K562 (cell line): ENCODE measurements at regions of chr19 and their contacts with region 1.

Region 1: GRCh38 chr19:17859533-17860330 is at the start of gene RPL18A:
- DNase-seq: peak; percentile 93 to 100 (median 94)
- ATAC-seq: peak; percentile 94
- H3K4me3 ChIP-seq: peak within 1 kb of the TSS; percentile 82
- H3K27ac ChIP-seq: peak within 1 kb of the TSS; percentile 91
- H3K4me1 ChIP-seq: peaks cover 7 to 34% of the 10 kb centered on the region in 2 experiments; a peak in 4 of 5 replicates
- H3K27me3 ChIP-seq: no peaks in the 10 kb centered on the region
- CTCF ChIP-seq: peak; percentile 91 to 98 (median 94)
- EP300 ChIP-seq: no peak; the same call in 1 of the 2 replicates
- POLR2A ChIP-seq: peak; percentile 99
- RAD21 ChIP-seq: peak; percentile 89
- polyA plus RNA-seq, gene RPL18A: 1,130 to 1,273 TPM

Region 2: DNA sequence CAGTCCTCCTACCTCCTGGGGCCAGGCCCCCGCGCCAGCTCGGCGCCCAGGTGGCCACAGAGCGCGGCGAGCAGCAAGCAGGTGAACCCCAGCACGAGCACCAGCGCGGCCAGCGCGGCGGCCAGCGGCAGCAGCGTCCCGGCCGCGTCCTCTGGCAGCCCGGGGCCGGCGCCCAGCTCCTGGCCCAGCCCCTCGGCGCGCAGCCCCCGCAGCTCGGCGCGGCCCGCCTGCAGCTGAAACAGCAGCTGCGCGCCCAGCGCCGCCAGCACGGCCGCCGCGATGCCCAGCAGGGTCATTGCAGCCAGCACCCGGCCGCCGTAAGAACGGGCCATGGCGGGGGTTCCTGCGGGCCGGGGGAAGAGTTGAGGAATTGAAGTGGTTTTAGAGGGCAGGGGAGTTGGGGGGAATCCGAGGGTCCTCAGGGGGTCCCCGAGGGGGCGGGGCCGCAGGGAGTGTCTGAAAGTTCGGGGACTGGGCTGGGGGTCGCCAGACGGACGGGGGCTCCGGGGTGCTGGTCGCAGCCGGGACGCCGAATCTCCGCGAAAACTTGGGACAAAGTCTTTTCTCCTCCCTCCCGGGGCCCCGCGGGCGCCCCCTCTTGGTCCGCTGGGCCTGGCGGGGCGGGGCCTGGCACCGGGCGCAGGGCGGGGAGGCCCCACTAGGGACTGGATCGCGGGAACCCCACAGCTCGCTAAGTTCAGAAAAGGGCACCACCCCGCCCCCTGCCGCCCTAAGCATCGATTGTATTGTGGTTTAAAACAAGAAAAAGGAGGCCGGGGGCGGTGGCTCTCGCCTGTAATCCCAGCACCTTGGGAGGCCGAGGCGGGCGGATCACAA is 411.4 kb before region 1 on chr19 and contains the start of gene TMEM221:
- CTCF ChIA-PET with region 1: no interaction called
- POLR2A ChIA-PET with region 1: no interaction called
- in situ Hi-C with region 1: loop called (anchors 5 kb)
- intact Hi-C with region 1: no loop called
- DNase-seq: peak; percentile 65 to 91 (median 84)
- ATAC-seq: peak; percentile 85
- H3K4me3 ChIP-seq: peak within 1 kb of the TSS; percentile 43
- H3K27ac ChIP-seq: no peak within 1 kb of the TSS
- H3K4me1 ChIP-seq: peaks cover 9 to 27% of the 10 kb centered on the region in 2 experiments; a peak in 4 of 5 replicates
- H3K27me3 ChIP-seq: peaks cover 0 to 10% of the 10 kb centered on the region in 2 experiments; a peak in 2 of 5 replicates
- CTCF ChIP-seq: peak; percentile 53 to 80 (median 69)
- EP300 ChIP-seq: no peak
- POLR2A ChIP-seq: no peak
- RAD21 ChIP-seq: peak; percentile 15 to 39; a peak in 2 of 4 replicates
- polyA plus RNA-seq, gene TMEM221: 0.06 TPM in 1 of 2 experiments, not detected in the other

Region 3: DNA sequence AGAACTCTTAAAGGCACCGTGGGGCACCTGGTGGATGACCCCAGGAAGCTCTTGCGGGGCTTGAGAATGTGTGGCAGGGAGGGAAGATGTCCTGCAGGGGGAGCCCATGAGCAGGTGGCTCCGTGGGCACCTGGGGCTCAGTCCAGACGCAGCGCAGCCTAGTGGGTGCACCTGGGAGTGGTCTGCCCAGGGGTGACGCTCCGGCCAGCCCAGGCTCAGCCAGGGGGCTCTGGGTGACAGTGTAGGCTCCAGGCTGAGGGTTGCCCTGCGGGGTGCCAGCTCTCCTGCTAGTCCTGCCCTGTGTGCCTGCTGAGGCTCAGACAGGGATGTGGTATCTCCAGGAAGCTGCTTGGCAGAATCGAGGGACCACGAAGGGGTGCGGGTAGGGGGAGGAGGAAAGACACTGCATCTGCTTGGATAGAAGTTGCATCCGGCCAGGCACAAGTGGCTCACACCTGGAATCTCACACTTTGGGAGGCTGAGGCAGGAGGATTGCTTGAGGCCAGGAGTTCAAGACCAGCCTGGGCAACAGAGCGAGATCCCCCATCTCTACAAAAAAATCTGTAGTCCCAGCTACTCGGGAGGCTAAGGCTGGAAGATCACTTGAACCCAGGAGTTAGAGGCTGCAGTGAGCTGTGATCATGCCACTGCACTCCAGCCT is 363.3 kb before region 1 on chr19:
- CTCF ChIA-PET with region 1: no interaction called
- POLR2A ChIA-PET with region 1: no interaction called
- in situ Hi-C with region 1: loop called (anchors 5 kb)
- intact Hi-C with region 1: no loop called
- DNase-seq: peak; percentile 84 to 90 (median 88)
- ATAC-seq: peak; percentile 97
- H3K4me3 ChIP-seq: no peak overlapping the region
- H3K27ac ChIP-seq: no peak overlapping the region
- H3K4me1 ChIP-seq: peaks cover 6 to 37% of the 10 kb centered on the region in 2 experiments; a peak in 3 of 5 replicates
- H3K27me3 ChIP-seq: no peaks in the 10 kb centered on the region
- CTCF ChIP-seq: peak; percentile 99 to 100 (median 99)
- EP300 ChIP-seq: no peak
- POLR2A ChIP-seq: no peak
- RAD21 ChIP-seq: peak; percentile 65 to 76

Region 4: GRCh38 chr19:17794731-17795536 is 64.8 kb before region 1 on chr19 and contains the start of gene B3GNT3:
- CTCF ChIA-PET with region 1: interaction called, 4 read pairs
- POLR2A ChIA-PET with region 1: interaction called, 4 read pairs
- in situ Hi-C with region 1: no loop called
- intact Hi-C with region 1: loop called (anchors 5 kb)
- DNase-seq: peak; percentile 56 to 83 (median 79)
- ATAC-seq: peak; percentile 73
- H3K4me3 ChIP-seq: peak within 1 kb of the TSS; percentile 40
- H3K27ac ChIP-seq: no peak within 1 kb of the TSS
- H3K4me1 ChIP-seq: peaks cover 15 to 26% of the 10 kb centered on the region in 2 experiments; a peak in 4 of 5 replicates
- H3K27me3 ChIP-seq: peaks cover 4 to 24% of the 10 kb centered on the region in 2 experiments; a peak in 3 of 5 replicates
- CTCF ChIP-seq: no peak
- EP300 ChIP-seq: no peak
- POLR2A ChIP-seq: no peak
- RAD21 ChIP-seq: peak in 1 of 2 experiments; percentile 5; a peak in 1 of 4 replicates
- polyA plus RNA-seq, gene B3GNT3: not detected

Region 5: DNA sequence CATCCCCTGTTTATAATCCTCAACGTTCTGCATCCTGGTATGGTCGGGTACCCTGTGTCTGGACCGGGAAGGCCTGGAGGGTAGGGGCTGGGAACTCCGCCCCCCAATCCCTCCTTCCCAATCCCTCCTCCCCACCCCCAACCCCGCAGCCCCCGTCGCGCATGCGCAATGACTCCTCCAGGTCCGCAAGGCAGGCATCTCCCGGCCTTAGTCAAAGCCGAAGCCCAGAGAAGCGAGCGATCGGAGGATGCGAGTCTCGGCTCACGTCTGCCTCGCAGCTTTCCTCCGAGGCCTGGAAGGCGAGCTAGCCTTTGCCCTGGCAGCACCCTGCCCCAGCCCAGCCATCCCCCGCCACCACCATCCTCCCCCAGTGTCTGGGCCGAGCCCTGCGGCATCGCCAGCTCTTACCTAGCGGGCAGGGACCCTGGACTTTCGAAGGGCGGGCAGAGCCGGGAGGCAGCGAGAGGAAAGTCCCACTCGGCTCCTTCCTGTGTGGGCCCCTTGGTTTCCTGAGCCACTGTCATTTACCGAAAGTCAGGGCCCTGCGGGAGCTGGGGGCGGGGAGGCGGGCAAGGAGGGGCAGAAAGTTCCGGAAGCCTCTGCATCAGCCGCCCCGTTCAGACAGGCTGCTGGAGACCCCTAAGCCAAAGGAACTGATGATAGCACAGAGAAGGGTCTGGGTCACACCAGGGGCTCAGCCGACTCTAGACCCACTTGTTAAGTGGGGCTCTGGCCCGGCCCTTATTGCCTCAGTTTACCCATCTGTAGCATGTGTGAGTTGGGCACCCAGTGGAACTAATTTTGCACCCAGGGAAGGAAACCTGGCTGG is 12.0 kb before region 1 on chr19 and contains the start of gene JAK3:
- CTCF ChIA-PET with region 1: no interaction called
- POLR2A ChIA-PET with region 1: interaction called, 24 read pairs
- in situ Hi-C with region 1: no loop called
- intact Hi-C with region 1: no loop called
- DNase-seq: peak; percentile 54 to 81 (median 78)
- ATAC-seq: peak; percentile 70
- H3K4me3 ChIP-seq: no peak within 1 kb of the TSS
- H3K27ac ChIP-seq: no peak within 1 kb of the TSS
- H3K4me1 ChIP-seq: peaks cover 0 to 25% of the 10 kb centered on the region in 2 experiments; a peak in 3 of 5 replicates
- H3K27me3 ChIP-seq: no peaks in the 10 kb centered on the region
- CTCF ChIP-seq: no peak
- EP300 ChIP-seq: no peak
- POLR2A ChIP-seq: no peak
- RAD21 ChIP-seq: no peak
- polyA plus RNA-seq, gene JAK3: 0.01 to 0.07 TPM

Region 6: DNA sequence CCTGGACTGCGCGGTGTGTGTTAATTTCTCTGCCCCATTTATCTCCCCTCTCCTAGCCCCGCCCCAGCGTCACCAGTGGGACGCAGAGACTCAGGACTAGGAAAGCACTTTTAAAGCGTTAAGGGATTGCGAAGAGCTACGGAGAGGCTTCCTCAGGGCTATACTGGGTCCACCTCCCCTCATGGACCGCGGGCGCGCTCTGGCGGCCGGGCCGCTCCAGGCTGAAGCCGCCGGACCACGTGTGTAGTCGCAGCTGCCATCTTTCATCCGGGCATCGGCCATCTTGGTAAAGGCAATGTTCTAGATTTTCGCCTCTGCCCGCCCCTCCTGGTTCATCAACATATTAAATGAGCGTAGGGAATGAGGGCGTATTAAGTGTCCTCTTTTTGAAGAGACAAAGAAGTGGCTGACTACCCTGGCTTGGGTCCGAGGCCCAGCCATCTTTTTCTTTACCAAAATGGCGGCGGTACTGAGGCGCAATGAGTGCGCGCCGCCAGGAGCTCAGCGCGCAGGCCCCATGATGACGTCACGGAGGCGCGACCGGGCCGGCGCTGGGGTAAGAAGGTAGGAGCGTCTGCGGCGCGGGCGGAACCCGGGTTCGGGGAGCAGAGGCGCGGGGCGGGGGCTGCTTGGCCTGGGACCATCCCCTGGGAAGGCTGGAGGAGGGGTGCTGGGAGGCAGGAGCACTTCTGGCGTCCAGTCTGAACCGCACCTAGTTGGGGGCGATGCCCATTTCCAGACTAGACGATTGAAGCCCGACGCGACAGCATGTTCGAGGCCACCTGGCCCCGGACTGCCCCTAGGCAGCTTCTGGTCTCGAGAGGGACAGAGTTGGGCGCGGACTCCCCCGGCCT is 73.0 kb after region 1 on chr19 and contains the start of gene CCDC124:
- CTCF ChIA-PET with region 1: interaction called, 13 read pairs
- POLR2A ChIA-PET with region 1: interaction called, 51 read pairs
- in situ Hi-C with region 1: no loop called
- intact Hi-C with region 1: loop called (anchors 1 kb)
- DNase-seq: peak; percentile 93 to 96 (median 96)
- ATAC-seq: peak; percentile 99
- H3K4me3 ChIP-seq: peak within 1 kb of the TSS; percentile 89
- H3K27ac ChIP-seq: peak within 1 kb of the TSS; percentile 95
- H3K4me1 ChIP-seq: peaks cover 12 to 18% of the 10 kb centered on the region in 2 experiments; a peak in 4 of 5 replicates
- H3K27me3 ChIP-seq: no peaks in the 10 kb centered on the region
- CTCF ChIP-seq: peak; percentile 95 to 99 (median 98)
- EP300 ChIP-seq: no peak; the same call in none of the 2 replicates
- POLR2A ChIP-seq: peak; percentile 91
- RAD21 ChIP-seq: peak; percentile 98 to 99
- polyA plus RNA-seq, gene CCDC124: 6.6 to 19.4 TPM